Activated CD8-positive, alpha-beta T cell treated with anti-CD3 and anti-CD28 coated beads for 36 hours (primary cell): ENCODE measurements at regions of chrX and their contacts with region 1.

Region 1: GRCh38 chrX:107672955-107673378 is 44.7 kb downstream of the PRPS1 start:
- DNase-seq: peak; percentile 80
- ATAC-seq: peak; percentile 64
- H3K4me3 Mint-ChIP-seq: peak overlapping the region; percentile 55
- H3K27ac Mint-ChIP-seq: peak overlapping the region; percentile 95
- H3K4me1 Mint-ChIP-seq: peaks cover 34% of the 10 kb centered on the region
- H3K27me3 Mint-ChIP-seq: no peaks in the 10 kb centered on the region
- CTCF ChIP-seq: peak; percentile 58

Region 2: GRCh38 chrX:107599450-107599861 is 73.5 kb before region 1 on chrX:
- CTCF ChIA-PET with region 1: no interaction called
- POLR2A ChIA-PET with region 1: no interaction called
- intact Hi-C with region 1: no loop called
- DNase-seq: no peak
- ATAC-seq: no peak
- H3K4me3 Mint-ChIP-seq: no peak overlapping the region
- H3K27ac Mint-ChIP-seq: no peak overlapping the region
- H3K4me1 Mint-ChIP-seq: no peaks in the 10 kb centered on the region
- H3K27me3 Mint-ChIP-seq: no peaks in the 10 kb centered on the region
- CTCF ChIP-seq: no peak

Region 3: DNA sequence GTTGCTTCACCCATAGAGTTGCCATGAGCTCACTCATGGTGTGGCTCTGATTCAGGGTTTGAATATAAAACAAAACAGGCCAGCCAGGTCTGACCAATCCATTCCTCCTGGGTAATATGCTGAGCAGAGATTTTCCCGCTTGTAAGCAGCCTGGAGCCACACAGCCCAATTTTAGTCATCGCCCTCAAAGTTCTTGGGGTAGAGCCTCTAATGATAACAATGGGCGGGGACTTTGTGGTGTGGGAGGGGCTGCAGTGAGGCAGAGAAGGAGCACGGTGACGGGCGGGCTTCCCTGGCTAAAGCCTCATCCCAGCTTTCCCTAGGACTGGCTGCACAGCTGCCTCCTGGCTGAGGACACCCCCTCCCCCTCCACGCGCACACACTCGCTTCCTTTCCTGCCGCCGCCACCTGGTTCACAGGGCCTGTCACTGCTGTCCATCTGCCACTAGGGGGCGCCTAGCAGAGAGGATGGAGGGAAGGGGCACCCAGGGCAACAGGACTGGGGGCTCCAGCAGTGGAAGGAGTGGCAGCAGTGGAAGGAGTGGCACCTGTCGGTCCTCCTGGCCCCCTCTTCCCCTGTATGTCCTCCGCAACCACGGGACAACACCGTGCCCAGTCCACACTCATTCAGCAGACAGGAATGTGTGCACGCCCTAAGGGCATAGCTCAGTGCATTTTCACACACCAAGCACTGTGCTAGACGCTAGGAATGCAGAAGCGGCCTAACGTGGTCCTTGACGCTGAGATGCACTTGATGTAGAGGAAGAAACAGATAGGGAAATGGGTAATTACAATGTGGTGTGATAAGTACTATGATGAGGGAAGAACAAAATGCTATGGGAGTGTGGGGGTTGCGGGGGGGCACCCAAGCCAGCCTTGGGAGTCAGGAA is 17.9 kb before region 1 on chrX:
- CTCF ChIA-PET with region 1: interaction called, 21 read pairs
- POLR2A ChIA-PET with region 1: interaction called, 6 read pairs
- intact Hi-C with region 1: no loop called
- DNase-seq: peak; percentile 67
- ATAC-seq: peak; percentile 94
- H3K4me3 Mint-ChIP-seq: no peak overlapping the region
- H3K27ac Mint-ChIP-seq: peak overlapping the region; percentile 73
- H3K4me1 Mint-ChIP-seq: peaks cover 14% of the 10 kb centered on the region
- H3K27me3 Mint-ChIP-seq: no peaks in the 10 kb centered on the region
- CTCF ChIP-seq: peak; percentile 72

Region 4: GRCh38 chrX:107710617-107711391 is 37.8 kb after region 1 on chrX:
- CTCF ChIA-PET with region 1: interaction called, 106 read pairs
- POLR2A ChIA-PET with region 1: interaction called, 184 read pairs
- intact Hi-C with region 1: loop called (anchors 2 kb)
- DNase-seq: peak; percentile 66
- ATAC-seq: peak; percentile 86
- H3K4me3 Mint-ChIP-seq: peak overlapping the region; percentile 41
- H3K27ac Mint-ChIP-seq: peak overlapping the region; percentile 95
- H3K4me1 Mint-ChIP-seq: peaks cover 56% of the 10 kb centered on the region
- H3K27me3 Mint-ChIP-seq: no peaks in the 10 kb centered on the region
- CTCF ChIP-seq: no peak

Region 5: GRCh38 chrX:107716816-107717700 is 44.1 kb after region 1 on chrX:
- CTCF ChIA-PET with region 1: interaction called, 106 read pairs
- POLR2A ChIA-PET with region 1: interaction called, 184 read pairs
- intact Hi-C with region 1: loop called (anchors 1 kb)
- DNase-seq: peak; percentile 88
- ATAC-seq: peak; percentile 79
- H3K4me3 Mint-ChIP-seq: peak overlapping the region; percentile 89
- H3K27ac Mint-ChIP-seq: peak overlapping the region; percentile 85
- H3K4me1 Mint-ChIP-seq: peaks cover 55% of the 10 kb centered on the region
- H3K27me3 Mint-ChIP-seq: no peaks in the 10 kb centered on the region
- CTCF ChIP-seq: no peak

Region 6: GRCh38 chrX:107849740-107850421 is 176.9 kb after region 1 on chrX:
- CTCF ChIA-PET with region 1: no interaction called
- POLR2A ChIA-PET with region 1: no interaction called
- intact Hi-C with region 1: no loop called
- DNase-seq: peak; percentile 5
- ATAC-seq: no peak
- H3K4me3 Mint-ChIP-seq: no peak overlapping the region
- H3K27ac Mint-ChIP-seq: no peak overlapping the region
- H3K4me1 Mint-ChIP-seq: peaks cover 11% of the 10 kb centered on the region
- H3K27me3 Mint-ChIP-seq: no peaks in the 10 kb centered on the region
- CTCF ChIP-seq: no peak

Region 7: DNA sequence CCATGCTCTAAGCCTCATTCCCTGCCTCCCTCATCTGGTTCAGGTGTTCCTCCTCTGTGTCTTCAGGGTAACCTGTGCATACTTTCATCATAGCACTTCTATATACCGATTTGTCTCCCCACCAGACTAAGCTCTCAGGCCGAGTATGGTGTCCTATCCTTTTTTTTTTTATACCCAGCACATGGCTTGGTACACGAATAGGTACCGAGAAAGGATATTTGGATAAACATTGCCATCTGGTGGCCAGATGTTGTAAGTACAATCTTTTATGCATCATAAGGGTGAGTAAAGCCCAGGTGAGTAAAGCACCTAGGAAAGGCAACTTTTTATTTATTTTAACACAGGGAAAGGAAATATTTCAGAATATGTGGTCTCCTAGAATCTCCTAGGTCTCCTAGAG is 221.1 kb after region 1 on chrX:
- CTCF ChIA-PET with region 1: interaction called, 4 read pairs
- POLR2A ChIA-PET with region 1: no interaction called
- intact Hi-C with region 1: loop called (anchors 5 kb)
- DNase-seq: peak; percentile 13
- ATAC-seq: peak; percentile 85
- H3K4me3 Mint-ChIP-seq: no peak overlapping the region
- H3K27ac Mint-ChIP-seq: no peak overlapping the region
- H3K4me1 Mint-ChIP-seq: peaks cover 2% of the 10 kb centered on the region
- H3K27me3 Mint-ChIP-seq: no peaks in the 10 kb centered on the region
- CTCF ChIP-seq: peak; percentile 50